Transverse colon (tissue), 4 donors: ENCODE measurements at regions of chr17 and their contacts with region 1.

Region 1: GRCh38 chr17:69344939-69345338 is 18.0 kb upstream of the ABCA5 start:
- DNase-seq: no peak
- H3K4me3 ChIP-seq: no peak overlapping the region
- H3K27ac ChIP-seq: no peak overlapping the region
- H3K4me1 ChIP-seq: peaks cover 0 to 4% (median 0%) of the 10 kb centered on the region in 4 donors
- H3K27me3 ChIP-seq: no peaks in the 10 kb centered on the region
- CTCF ChIP-seq: no peak
- EP300 ChIP-seq: no peak
- POLR2A ChIP-seq: no peak

Region 2: GRCh38 chr17:69375229-69375628 is 30.3 kb after region 1 on chr17:
- in situ Hi-C with region 1: no loop called
- intact Hi-C with region 1: loop called (anchors 1 kb)
- DNase-seq: no peak
- H3K4me3 ChIP-seq: no peak overlapping the region
- H3K27ac ChIP-seq: no peak overlapping the region
- H3K4me1 ChIP-seq: peaks cover 0 to 4% (median 0%) of the 10 kb centered on the region in 4 donors
- H3K27me3 ChIP-seq: no peaks in the 10 kb centered on the region
- CTCF ChIP-seq: no peak
- EP300 ChIP-seq: no peak
- POLR2A ChIP-seq: no peak

Region 3: GRCh38 chr17:69404382-69404781 is 59.4 kb after region 1 on chr17:
- in situ Hi-C with region 1: no loop called
- intact Hi-C with region 1: no loop called
- DNase-seq: no peak
- H3K4me3 ChIP-seq: no peak overlapping the region
- H3K27ac ChIP-seq: no peak overlapping the region
- H3K4me1 ChIP-seq: no peaks in the 10 kb centered on the region
- H3K27me3 ChIP-seq: no peaks in the 10 kb centered on the region
- CTCF ChIP-seq: no peak
- EP300 ChIP-seq: no peak
- POLR2A ChIP-seq: no peak

Region 4: DNA sequence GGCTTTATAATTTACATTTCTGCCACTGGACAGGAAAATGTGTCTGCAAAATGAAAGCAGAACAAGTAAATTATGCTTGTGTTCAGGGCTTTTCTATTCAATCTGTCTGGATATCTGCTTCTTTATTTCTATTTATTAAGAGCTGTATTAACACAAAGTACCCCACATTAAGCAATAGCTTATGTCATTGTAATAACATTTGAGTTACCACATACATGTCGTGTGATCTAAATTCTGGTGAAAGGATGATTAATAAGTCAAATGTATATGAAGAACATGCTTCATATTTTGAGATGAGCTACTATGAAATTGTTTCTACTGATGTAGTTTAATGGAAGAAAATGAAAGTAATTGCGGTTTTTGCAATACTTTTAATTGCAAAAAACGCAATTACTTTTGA is 1062.6 kb after region 1 on chr17:
- in situ Hi-C with region 1: no loop called
- intact Hi-C with region 1: no loop called
- DNase-seq: no peak
- H3K4me3 ChIP-seq: no peak overlapping the region
- H3K27ac ChIP-seq: no peak overlapping the region
- H3K4me1 ChIP-seq: no peaks in the 10 kb centered on the region
- H3K27me3 ChIP-seq: no peaks in the 10 kb centered on the region
- CTCF ChIP-seq: no peak
- EP300 ChIP-seq: no peak
- POLR2A ChIP-seq: no peak